H1 (cell line): ENCODE measurements at regions of chr4 and their contacts with region 1.

Region 1: DNA sequence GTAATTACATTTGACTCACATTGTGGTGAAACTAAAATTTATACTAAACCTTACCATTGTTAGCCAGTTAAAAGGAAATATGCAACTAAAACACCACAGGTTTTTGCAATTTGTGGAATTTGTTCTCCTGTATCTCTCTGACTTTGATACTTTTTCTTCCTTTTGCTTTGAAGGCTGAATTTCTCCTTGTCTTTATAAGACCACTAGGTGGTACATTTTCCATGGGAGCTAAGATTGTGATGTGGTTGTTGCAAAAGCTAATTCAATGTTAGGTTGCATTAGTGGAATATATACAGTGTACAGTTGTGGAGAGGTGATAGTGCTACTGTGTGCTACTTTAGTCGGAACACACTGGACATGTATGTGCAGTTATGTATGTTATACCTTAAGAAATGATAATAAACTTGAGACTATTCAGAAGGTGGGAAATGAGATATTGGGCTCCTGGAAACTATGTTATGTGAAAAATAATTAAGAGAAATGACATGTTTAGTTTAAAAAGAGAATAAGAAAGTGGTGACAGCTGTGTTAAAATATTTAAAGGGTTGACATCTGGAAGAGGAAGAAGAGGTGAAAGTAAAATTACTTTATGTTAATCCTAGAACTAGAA is 70.3 kb downstream of the ARL9 start:
- DNase-seq: no peak
- H3K4me3 ChIP-seq: no peak overlapping the region
- H3K27ac ChIP-seq: no peak overlapping the region
- H3K4me1 ChIP-seq: no peaks in the 10 kb centered on the region
- H3K27me3 ChIP-seq: no peaks in the 10 kb centered on the region
- CTCF ChIP-seq: peak in 2 of 3 experiments; percentile 7 to 48; a peak in 2 of 4 replicates
- EP300 ChIP-seq: no peak
- POLR2A ChIP-seq: no peak
- RAD21 ChIP-seq: peak; percentile 33 to 45; a peak in 3 of 4 replicates

Region 2: GRCh38 chr4:56606385-56606784 is 30.5 kb after region 1 on chr4:
- CTCF ChIA-PET with region 1: interaction called, 12 read pairs
- POLR2A ChIA-PET with region 1: no interaction called
- DNase-seq: no peak
- H3K4me3 ChIP-seq: peak overlapping the region in 1 of 4 experiments; percentile 47; a peak in 3 of 8 replicates
- H3K27ac ChIP-seq: no peak overlapping the region
- H3K4me1 ChIP-seq: peaks cover 5 to 7% (median 7%) of the 10 kb centered on the region in 4 experiments; a peak in 4 of 7 replicates
- H3K27me3 ChIP-seq: peaks cover 26 to 57% (median 38%) of the 10 kb centered on the region in 4 experiments
- CTCF ChIP-seq: no peak
- EP300 ChIP-seq: no peak
- POLR2A ChIP-seq: no peak
- RAD21 ChIP-seq: no peak